Activated naive CD8-positive, alpha-beta T cell treated with anti-CD3 and anti-CD28 coated beads, Interleukin-2, amount 10 ng/mL, durations not matched to agents 7 days and 5 days (primary cell): ENCODE measurements at regions of chr9 and their contacts with region 1.

Region 1: GRCh38 chr9:33024966-33025571 is at the start of gene DNAJA1:
- DNase-seq: peak; percentile 99
- ATAC-seq: peak; percentile 76
- H3K4me3 Mint-ChIP-seq: peak within 1 kb of the TSS; percentile 97
- H3K27ac Mint-ChIP-seq: peak within 1 kb of the TSS; percentile 94
- H3K4me1 Mint-ChIP-seq: peaks cover 51% of the 10 kb centered on the region
- H3K27me3 Mint-ChIP-seq: no peaks in the 10 kb centered on the region
- total RNA-seq, gene DNAJA1: 99.1 to 102 TPM

Region 2: GRCh38 chr9:32906213-32906612 is 118.9 kb before region 1 on chr9:
- POLR2A ChIA-PET with region 1: no interaction called
- DNase-seq: no peak
- ATAC-seq: no peak
- H3K4me3 Mint-ChIP-seq: no peak overlapping the region
- H3K27ac Mint-ChIP-seq: no peak overlapping the region
- H3K4me1 Mint-ChIP-seq: peaks cover 5% of the 10 kb centered on the region
- H3K27me3 Mint-ChIP-seq: peaks cover 14% of the 10 kb centered on the region

Region 3: GRCh38 chr9:33007755-33008154 is 17.3 kb before region 1 on chr9:
- POLR2A ChIA-PET with region 1: interaction called, 62 read pairs
- DNase-seq: no peak
- ATAC-seq: no peak
- H3K4me3 Mint-ChIP-seq: no peak overlapping the region
- H3K27ac Mint-ChIP-seq: no peak overlapping the region
- H3K4me1 Mint-ChIP-seq: peaks cover under 1% of the 10 kb centered on the region
- H3K27me3 Mint-ChIP-seq: no peaks in the 10 kb centered on the region

Region 4: GRCh38 chr9:33051144-33051543 is 26.1 kb after region 1 on chr9:
- POLR2A ChIA-PET with region 1: no interaction called
- DNase-seq: no peak
- ATAC-seq: no peak
- H3K4me3 Mint-ChIP-seq: no peak overlapping the region
- H3K27ac Mint-ChIP-seq: no peak overlapping the region
- H3K4me1 Mint-ChIP-seq: peaks cover 6% of the 10 kb centered on the region
- H3K27me3 Mint-ChIP-seq: no peaks in the 10 kb centered on the region

Region 5: GRCh38 chr9:33076358-33077004 is 51.4 kb after region 1 on chr9 and contains the start of gene SMU1:
- POLR2A ChIA-PET with region 1: interaction called, 31 read pairs
- DNase-seq: peak; percentile 91
- ATAC-seq: peak; percentile 97
- H3K4me3 Mint-ChIP-seq: peak within 1 kb of the TSS; percentile 100
- H3K27ac Mint-ChIP-seq: peak within 1 kb of the TSS; percentile 100
- H3K4me1 Mint-ChIP-seq: peaks cover 21% of the 10 kb centered on the region
- H3K27me3 Mint-ChIP-seq: no peaks in the 10 kb centered on the region
- total RNA-seq, gene SMU1: 22.2 to 22.9 TPM

Region 6: GRCh38 chr9:33139421-33140228 is 114.6 kb after region 1 on chr9:
- POLR2A ChIA-PET with region 1: no interaction called
- DNase-seq: no peak
- ATAC-seq: no peak
- H3K4me3 Mint-ChIP-seq: no peak overlapping the region
- H3K27ac Mint-ChIP-seq: no peak overlapping the region
- H3K4me1 Mint-ChIP-seq: peaks cover 56% of the 10 kb centered on the region
- H3K27me3 Mint-ChIP-seq: no peaks in the 10 kb centered on the region

Region 7: GRCh38 chr9:33225319-33226149 is 200.5 kb after region 1 on chr9:
- POLR2A ChIA-PET with region 1: interaction called, 13 read pairs
- DNase-seq: peak; percentile 45
- ATAC-seq: no peak
- H3K4me3 Mint-ChIP-seq: no peak overlapping the region
- H3K27ac Mint-ChIP-seq: peak overlapping the region; percentile 7
- H3K4me1 Mint-ChIP-seq: peaks cover 27% of the 10 kb centered on the region
- H3K27me3 Mint-ChIP-seq: no peaks in the 10 kb centered on the region

Region 8: DNA sequence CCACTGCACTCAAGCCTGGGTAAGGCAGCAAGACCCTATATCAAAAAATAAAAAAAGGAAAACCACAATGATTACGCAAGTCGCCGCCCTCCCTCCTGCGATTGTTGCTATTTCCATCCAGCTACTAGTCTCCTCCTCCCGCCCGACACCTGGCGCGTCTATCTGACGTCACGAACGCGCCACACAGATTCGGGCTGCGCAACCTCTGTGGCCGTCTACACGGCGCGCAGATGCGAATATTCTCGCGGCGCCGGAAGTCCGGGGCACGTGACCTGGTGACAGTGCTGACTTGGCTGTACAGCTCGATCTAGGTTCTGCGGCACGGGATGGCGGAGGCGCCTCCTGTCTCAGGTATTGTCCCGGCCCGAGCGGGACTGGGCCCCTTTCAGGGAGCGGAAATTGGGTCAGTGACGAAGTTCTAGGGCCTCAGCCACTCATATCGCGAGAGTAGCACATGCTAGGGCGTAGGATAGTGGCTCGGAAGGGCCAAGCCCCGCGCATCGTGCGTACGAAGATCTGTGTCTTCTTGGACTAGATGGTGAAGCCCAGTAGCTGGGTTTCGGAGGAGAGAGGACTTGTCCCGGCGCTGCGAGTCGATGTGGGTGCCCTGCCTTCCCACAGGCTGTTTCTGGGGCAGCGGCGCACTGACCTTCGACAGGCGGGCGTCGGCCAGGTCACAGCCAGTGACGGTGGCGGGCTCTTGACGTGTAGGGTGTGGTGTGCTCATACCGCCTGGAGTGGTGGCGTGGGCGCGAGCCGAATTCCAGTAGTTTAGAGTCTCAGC is 265.4 kb after region 1 on chr9 and contains the start of gene NFX1:
- POLR2A ChIA-PET with region 1: interaction called, 17 read pairs
- DNase-seq: peak; percentile 97
- ATAC-seq: peak; percentile 89
- H3K4me3 Mint-ChIP-seq: peak within 1 kb of the TSS; percentile 93
- H3K27ac Mint-ChIP-seq: peak within 1 kb of the TSS; percentile 98
- H3K4me1 Mint-ChIP-seq: peaks cover 45% of the 10 kb centered on the region
- H3K27me3 Mint-ChIP-seq: no peaks in the 10 kb centered on the region
- total RNA-seq, gene NFX1: 47.4 to 48.2 TPM